Kidney (tissue), 22 donors: ENCODE measurements at regions of chr17 and their contacts with region 1.

Region 1: GRCh38 chr17:55524440-55525220 is 13.4 kb upstream of the SMIM36 start:
- DNase-seq: no peak
- H3K4me3 ChIP-seq: no peak overlapping the region
- H3K27ac ChIP-seq: no peak overlapping the region
- H3K4me1 ChIP-seq: no peaks in the 10 kb centered on the region
- H3K27me3 ChIP-seq: no peaks in the 10 kb centered on the region
- CTCF ChIP-seq: no peak

Region 2: GRCh38 chr17:55394357-55395021 is 130.1 kb before region 1 on chr17:
- intact Hi-C with region 1: no loop called
- DNase-seq: peak in 2 of 5 donors; percentile 12 to 24
- H3K4me3 ChIP-seq: no peak overlapping the region
- H3K27ac ChIP-seq: no peak overlapping the region
- H3K4me1 ChIP-seq: peaks cover 0 to 8% (median 0%) of the 10 kb centered on the region in 3 donors
- H3K27me3 ChIP-seq: no peaks in the 10 kb centered on the region
- CTCF ChIP-seq: no peak

Region 3: GRCh38 chr17:55770148-55770870 is 245.7 kb after region 1 on chr17:
- intact Hi-C with region 1: loop called (anchors 5 kb)
- DNase-seq: peak in 2 of 5 donors; percentile 77 to 81
- H3K4me3 ChIP-seq: no peak overlapping the region
- H3K27ac ChIP-seq: peak overlapping the region in 1 of 2 donors; percentile 42
- H3K4me1 ChIP-seq: peaks cover 0 to 13% (median 3%) of the 10 kb centered on the region in 3 donors
- H3K27me3 ChIP-seq: no peaks in the 10 kb centered on the region
- CTCF ChIP-seq: peak; percentile 46